ENCODE measurements at regions of chr17 and their contacts with region 1.

Region 1: GRCh38 chr17:51585514-51586104 is 325.3 kb downstream of the UTP18 start:
- DNase-seq: peak; percentile 21
- H3K4me3 ChIP-seq: no peak overlapping the region
- H3K27ac ChIP-seq: no peak overlapping the region
- H3K4me1 ChIP-seq: no peaks in the 10 kb centered on the region
- H3K27me3 ChIP-seq: no peaks in the 10 kb centered on the region
- CTCF ChIP-seq: peak; percentile 86 to 96

Region 2: GRCh38 chr17:51381262-51381661 is 204.3 kb before region 1 on chr17:
- CTCF ChIA-PET with region 1: no interaction called
- dilution Hi-C with region 1: no loop called
- in situ Hi-C with region 1: no loop called
- intact Hi-C with region 1: no loop called
- DNase-seq: no peak
- H3K4me3 ChIP-seq: no peak overlapping the region
- H3K27ac ChIP-seq: no peak overlapping the region
- H3K4me1 ChIP-seq: no peaks in the 10 kb centered on the region
- H3K27me3 ChIP-seq: no peaks in the 10 kb centered on the region
- CTCF ChIP-seq: no peak

Region 3: DNA sequence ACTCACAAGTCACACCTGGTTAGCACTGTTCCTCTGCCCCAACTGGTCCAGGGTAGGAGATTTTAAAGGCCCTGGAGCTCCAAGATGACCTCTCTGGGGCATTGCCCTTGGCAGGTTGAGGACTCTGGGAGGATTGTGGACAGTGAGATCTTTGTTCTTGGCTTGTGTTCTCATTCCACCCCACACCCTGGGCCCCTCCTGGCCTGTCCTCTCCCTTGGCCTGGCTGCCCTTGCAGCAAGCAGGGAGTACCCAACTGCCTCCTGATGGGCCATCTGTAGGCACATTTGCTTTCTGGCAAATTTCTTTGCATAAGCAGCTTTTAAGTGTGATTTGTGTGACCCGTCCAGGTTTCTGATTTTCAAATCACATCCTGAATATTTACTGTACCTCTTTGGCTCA is 85.7 kb before region 1 on chr17:
- CTCF ChIA-PET with region 1: no interaction called
- dilution Hi-C with region 1: no loop called
- in situ Hi-C with region 1: no loop called
- intact Hi-C with region 1: no loop called
- DNase-seq: no peak
- H3K4me3 ChIP-seq: no peak overlapping the region
- H3K27ac ChIP-seq: no peak overlapping the region
- H3K4me1 ChIP-seq: no peaks in the 10 kb centered on the region
- H3K27me3 ChIP-seq: no peaks in the 10 kb centered on the region
- CTCF ChIP-seq: no peak

Region 4: DNA sequence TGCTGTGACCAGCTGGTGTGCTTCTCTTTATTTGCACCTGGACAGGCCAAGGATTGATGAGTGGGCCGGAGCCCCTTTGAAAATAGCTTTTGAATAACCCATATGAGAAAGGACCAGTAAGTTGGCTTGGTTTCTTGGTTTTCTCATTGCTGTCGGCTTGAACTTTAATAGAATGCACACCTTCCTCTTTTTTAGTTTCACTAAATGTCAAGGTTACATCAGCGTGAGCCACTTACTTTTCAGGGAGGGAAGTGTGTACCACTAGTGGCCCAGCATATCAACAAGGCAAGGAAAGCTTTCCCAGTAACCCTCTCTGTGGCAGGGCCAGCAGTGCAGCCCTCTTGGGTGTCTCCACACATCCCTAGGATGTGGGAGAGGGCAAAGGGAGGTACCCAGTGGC is 139.6 kb after region 1 on chr17:
- CTCF ChIA-PET with region 1: interaction called, 12 read pairs
- dilution Hi-C with region 1: no loop called
- in situ Hi-C with region 1: loop called in 1 of 2 experiments (anchors 25 kb)
- intact Hi-C with region 1: no loop called
- DNase-seq: no peak
- H3K4me3 ChIP-seq: no peak overlapping the region
- H3K27ac ChIP-seq: no peak overlapping the region
- H3K4me1 ChIP-seq: no peaks in the 10 kb centered on the region
- H3K27me3 ChIP-seq: peaks cover 3% of the 10 kb centered on the region
- CTCF ChIP-seq: no peak

Region 5: GRCh38 chr17:51734462-51734861 is 148.9 kb after region 1 on chr17:
- CTCF ChIA-PET with region 1: no interaction called
- dilution Hi-C with region 1: no loop called
- in situ Hi-C with region 1: loop called in 1 of 2 experiments (anchors 25 kb)
- intact Hi-C with region 1: no loop called
- DNase-seq: no peak
- H3K4me3 ChIP-seq: no peak overlapping the region
- H3K27ac ChIP-seq: no peak overlapping the region
- H3K4me1 ChIP-seq: no peaks in the 10 kb centered on the region
- H3K27me3 ChIP-seq: no peaks in the 10 kb centered on the region
- CTCF ChIP-seq: peak; percentile 31 to 68

Region 6: GRCh38 chr17:51860954-51861561 is 275.4 kb after region 1 on chr17:
- CTCF ChIA-PET with region 1: no interaction called
- dilution Hi-C with region 1: no loop called
- in situ Hi-C with region 1: no loop called
- intact Hi-C with region 1: loop called (anchors 10 kb)
- DNase-seq: peak; percentile 35
- H3K4me3 ChIP-seq: no peak overlapping the region
- H3K27ac ChIP-seq: no peak overlapping the region
- H3K4me1 ChIP-seq: no peaks in the 10 kb centered on the region
- H3K27me3 ChIP-seq: peaks cover 3% of the 10 kb centered on the region
- CTCF ChIP-seq: peak; percentile 63 to 87

Measured in mammary epithelial cell (primary cell).